HCT116 (cell line): ENCODE measurements at regions of chr10 and their contacts with region 1.

Region 1: DNA sequence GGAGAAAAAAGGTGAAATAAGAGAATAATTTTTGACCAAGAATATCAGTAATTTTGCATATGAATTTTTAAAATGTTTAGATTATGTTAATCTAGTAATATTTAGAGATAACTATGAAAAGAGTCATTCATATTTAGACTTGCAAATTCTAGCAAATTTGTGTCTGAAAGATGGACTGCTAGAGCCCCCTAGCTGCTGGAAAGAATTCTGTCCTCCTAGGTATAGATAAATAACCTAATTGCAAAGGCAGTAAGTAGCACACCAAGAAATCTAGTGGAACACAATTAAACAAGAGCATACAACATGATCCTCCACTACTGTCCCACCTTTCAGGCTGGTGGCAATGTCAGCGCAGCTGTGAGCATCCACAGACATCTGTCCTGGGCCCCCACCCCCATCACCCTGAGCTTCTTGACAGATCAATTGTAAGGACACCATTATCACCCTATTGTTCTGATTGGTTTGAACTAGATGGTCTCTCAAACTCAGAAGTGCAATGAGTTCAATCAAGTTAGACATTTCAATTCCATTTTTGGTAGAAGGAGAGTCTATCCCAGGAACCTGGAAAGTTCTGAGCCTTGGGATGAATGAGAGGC is 15.0 kb upstream of the GFRA1 start:
- DNase-seq: peak; percentile 37
- ATAC-seq: peak; percentile 75
- H3K4me3 ChIP-seq: no peak overlapping the region
- H3K27ac ChIP-seq: no peak overlapping the region
- H3K4me1 ChIP-seq: no peaks in the 10 kb centered on the region
- H3K27me3 ChIP-seq: peaks cover 49% of the 10 kb centered on the region
- CTCF ChIP-seq: peak; percentile 69 to 80 (median 77)
- POLR2A ChIP-seq: no peak
- RAD21 ChIP-seq: peak; percentile 80

Region 2: DNA sequence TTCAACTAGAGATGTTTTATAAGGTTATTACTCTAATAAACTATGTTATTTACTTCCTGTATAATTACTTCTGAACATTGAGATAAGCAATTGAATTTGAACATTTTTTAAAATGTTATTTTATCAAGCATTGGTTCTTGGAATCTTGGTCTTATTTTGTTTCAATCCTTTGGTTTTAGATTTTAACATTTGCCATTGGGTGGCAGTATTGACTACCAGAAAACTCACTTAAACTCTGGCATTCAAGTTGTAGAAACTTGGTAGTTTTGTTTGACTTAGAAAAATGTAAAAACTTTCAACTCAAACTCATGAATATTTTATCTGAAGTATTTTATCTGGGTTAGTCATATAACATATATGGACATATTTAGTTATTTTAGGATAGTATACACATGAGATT is 1146.8 kb before region 1 on chr10:
- CTCF ChIA-PET with region 1: no interaction called
- POLR2A ChIA-PET with region 1: no interaction called
- RAD21 ChIA-PET with region 1: no interaction called
- intact Hi-C with region 1: loop called (anchors 10 kb)
- DNase-seq: peak; percentile 15
- ATAC-seq: no peak
- H3K4me3 ChIP-seq: no peak overlapping the region
- H3K27ac ChIP-seq: no peak overlapping the region
- H3K4me1 ChIP-seq: no peaks in the 10 kb centered on the region
- H3K27me3 ChIP-seq: peaks cover 36% of the 10 kb centered on the region
- CTCF ChIP-seq: peak; percentile 50 to 70 (median 58); a peak in 4 of 6 replicates
- POLR2A ChIP-seq: no peak
- RAD21 ChIP-seq: peak; percentile 72

Region 3: GRCh38 chr10:115432188-115432775 is 855.7 kb before region 1 on chr10:
- CTCF ChIA-PET with region 1: interaction called, 5 read pairs
- POLR2A ChIA-PET with region 1: no interaction called
- RAD21 ChIA-PET with region 1: no interaction called
- intact Hi-C with region 1: loop called (anchors 2 kb)
- DNase-seq: peak; percentile 26
- ATAC-seq: peak; percentile 87
- H3K4me3 ChIP-seq: no peak overlapping the region
- H3K27ac ChIP-seq: no peak overlapping the region
- H3K4me1 ChIP-seq: no peaks in the 10 kb centered on the region
- H3K27me3 ChIP-seq: peaks cover 5% of the 10 kb centered on the region; the same call in 1 of the 2 replicates
- CTCF ChIP-seq: peak; percentile 52 to 73 (median 62); a peak in 5 of 6 replicates
- POLR2A ChIP-seq: no peak
- RAD21 ChIP-seq: peak; percentile 77

Region 4: DNA sequence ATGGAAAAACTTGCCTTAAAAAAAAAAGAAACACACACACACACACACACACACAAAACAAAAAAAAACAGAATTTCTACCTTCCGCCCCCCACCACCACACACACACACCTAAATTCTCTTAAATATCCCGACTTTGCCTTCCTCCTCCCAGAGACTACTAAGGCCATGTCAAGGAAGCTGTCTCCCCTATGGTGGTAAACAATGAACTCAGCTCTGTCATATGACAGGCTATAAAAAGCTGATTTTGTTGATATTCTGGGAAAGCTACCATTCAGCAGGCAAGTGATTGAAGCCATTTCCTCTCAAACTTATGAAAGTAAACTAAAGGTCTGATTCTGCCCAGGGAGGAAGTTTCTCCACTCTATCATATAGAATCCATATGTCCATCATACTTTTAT is 486.0 kb before region 1 on chr10:
- CTCF ChIA-PET with region 1: interaction called, 4 read pairs
- POLR2A ChIA-PET with region 1: no interaction called
- RAD21 ChIA-PET with region 1: no interaction called
- intact Hi-C with region 1: loop called (anchors 1 kb)
- DNase-seq: no peak
- ATAC-seq: no peak
- H3K4me3 ChIP-seq: no peak overlapping the region
- H3K27ac ChIP-seq: no peak overlapping the region
- H3K4me1 ChIP-seq: no peaks in the 10 kb centered on the region
- H3K27me3 ChIP-seq: peaks cover 17% of the 10 kb centered on the region; the same call in 1 of the 2 replicates
- CTCF ChIP-seq: no peak
- POLR2A ChIP-seq: no peak
- RAD21 ChIP-seq: no peak

Region 5: DNA sequence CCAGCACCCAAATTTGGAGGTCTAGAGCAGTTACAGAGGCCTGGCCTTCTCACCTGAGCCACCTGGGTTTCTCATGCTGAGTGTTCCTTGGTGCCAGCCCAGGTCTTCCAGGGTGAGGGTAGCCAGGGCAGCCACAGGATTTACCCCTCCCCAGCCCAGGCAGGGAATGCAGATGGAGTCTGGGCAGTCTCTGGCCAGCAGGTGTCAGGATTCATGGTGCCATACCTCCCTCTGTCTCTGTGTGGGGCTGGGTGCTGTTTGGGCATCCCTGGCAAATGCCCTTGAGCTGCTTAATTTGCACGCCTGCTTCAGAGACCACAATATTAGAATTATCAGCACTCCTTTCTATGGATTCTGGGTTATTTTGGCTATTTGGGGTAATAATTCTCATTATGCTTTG is 261.7 kb before region 1 on chr10:
- CTCF ChIA-PET with region 1: interaction called, 6 read pairs
- POLR2A ChIA-PET with region 1: no interaction called
- RAD21 ChIA-PET with region 1: no interaction called
- intact Hi-C with region 1: loop called (anchors 1 kb)
- DNase-seq: no peak
- ATAC-seq: peak; percentile 85
- H3K4me3 ChIP-seq: no peak overlapping the region
- H3K27ac ChIP-seq: no peak overlapping the region
- H3K4me1 ChIP-seq: no peaks in the 10 kb centered on the region
- H3K27me3 ChIP-seq: no peaks in the 10 kb centered on the region
- CTCF ChIP-seq: peak; percentile 17 to 41 (median 35); a peak in 4 of 6 replicates
- POLR2A ChIP-seq: no peak
- RAD21 ChIP-seq: 0 out of 2 replicates have a peak, but pooled peaks have one; percentile 16

Region 6: DNA sequence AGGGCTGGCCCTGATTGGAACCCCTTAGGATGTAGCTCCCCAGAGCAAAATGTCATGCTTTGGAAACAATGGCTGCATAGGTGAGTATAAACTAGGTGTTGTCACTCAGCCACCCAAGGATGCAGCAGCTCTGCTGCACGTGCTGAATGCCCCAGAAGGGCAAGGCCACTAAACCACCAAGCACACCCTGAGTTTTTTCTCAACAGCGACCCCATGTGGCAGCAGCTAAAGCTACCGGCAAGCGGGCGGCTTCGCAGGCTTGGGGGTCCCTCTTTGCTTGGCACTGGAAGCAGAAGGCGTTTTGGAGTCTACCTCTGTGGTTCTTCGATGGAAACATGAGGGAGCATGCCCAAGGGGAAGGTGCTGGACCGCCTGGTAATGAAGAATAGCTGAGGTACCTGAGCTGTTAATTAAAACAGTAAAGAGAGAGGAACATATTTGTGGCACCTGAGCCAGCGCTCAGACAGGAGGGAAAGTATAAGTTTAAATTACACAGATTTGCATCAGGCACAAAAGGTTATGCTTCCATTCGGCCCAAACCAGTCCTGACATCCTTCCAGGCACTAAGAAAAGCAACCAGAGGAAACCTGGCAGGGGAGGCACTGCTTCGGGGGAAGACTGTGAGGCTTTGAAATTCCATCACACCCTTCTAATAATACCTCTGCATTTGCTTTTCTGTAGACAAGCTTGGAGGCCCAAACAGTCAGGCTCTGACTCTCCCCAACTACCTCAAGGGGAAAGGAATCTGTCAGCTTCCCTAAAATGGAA is 167.1 kb before region 1 on chr10:
- CTCF ChIA-PET with region 1: no interaction called
- POLR2A ChIA-PET with region 1: no interaction called
- RAD21 ChIA-PET with region 1: no interaction called
- intact Hi-C with region 1: no loop called
- DNase-seq: no peak
- ATAC-seq: peak; percentile 53; the same call in 1 of the 2 replicates
- H3K4me3 ChIP-seq: no peak overlapping the region
- H3K27ac ChIP-seq: no peak overlapping the region
- H3K4me1 ChIP-seq: no peaks in the 10 kb centered on the region
- H3K27me3 ChIP-seq: peaks cover 3% of the 10 kb centered on the region; the same call in 1 of the 2 replicates
- CTCF ChIP-seq: peak; percentile 22 to 63 (median 44); a peak in 5 of 6 replicates
- POLR2A ChIP-seq: no peak
- RAD21 ChIP-seq: peak; percentile 36; the same call in 1 of the 2 replicates